H1 (cell line): ENCODE measurements at regions of chr3 and their contacts with region 1.

Region 1: DNA sequence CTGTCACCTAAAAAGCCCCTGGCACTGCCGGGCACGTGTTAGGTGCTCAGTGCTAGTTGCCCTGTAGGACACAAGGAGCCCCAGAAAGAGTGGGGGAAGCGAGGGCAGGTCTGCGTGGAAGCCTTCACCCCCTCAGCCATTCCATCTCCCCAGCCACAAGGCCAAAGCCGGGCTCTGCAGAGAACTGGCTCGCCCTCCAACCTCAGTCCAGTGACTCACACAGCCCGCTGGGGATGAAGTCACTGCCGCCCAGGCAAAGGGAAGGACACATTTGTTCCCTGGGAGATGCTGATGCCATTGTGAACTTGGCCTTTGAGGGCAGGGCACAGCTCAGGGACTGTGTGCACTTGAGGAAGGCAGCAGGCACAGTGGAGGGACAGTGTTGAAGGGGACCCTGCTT is 48.1 kb downstream of the IQSEC1 start:
- DNase-seq: no peak
- H3K4me3 ChIP-seq: no peak overlapping the region
- H3K27ac ChIP-seq: no peak overlapping the region
- H3K4me1 ChIP-seq: peaks cover 0 to 13% (median 9%) of the 10 kb centered on the region in 4 experiments; a peak in 5 of 7 replicates
- H3K27me3 ChIP-seq: no peaks in the 10 kb centered on the region; a peak in 2 of 7 replicates
- CTCF ChIP-seq: no peak
- EP300 ChIP-seq: no peak
- POLR2A ChIP-seq: no peak
- RAD21 ChIP-seq: no peak

Region 2: GRCh38 chr3:12940854-12941253 is 84.2 kb before region 1 on chr3:
- CTCF ChIA-PET with region 1: no interaction called
- POLR2A ChIA-PET with region 1: no interaction called
- DNase-seq: no peak
- H3K4me3 ChIP-seq: no peak overlapping the region
- H3K27ac ChIP-seq: no peak overlapping the region
- H3K4me1 ChIP-seq: peaks cover 0 to 9% (median 6%) of the 10 kb centered on the region in 4 experiments; a peak in 6 of 7 replicates
- H3K27me3 ChIP-seq: no peaks in the 10 kb centered on the region
- CTCF ChIP-seq: no peak
- EP300 ChIP-seq: no peak
- POLR2A ChIP-seq: no peak
- RAD21 ChIP-seq: no peak

Region 3: GRCh38 chr3:13002398-13003124 is 22.5 kb before region 1 on chr3:
- CTCF ChIA-PET with region 1: interaction called, 71 read pairs
- POLR2A ChIA-PET with region 1: interaction called, 3 read pairs
- DNase-seq: no peak
- H3K4me3 ChIP-seq: no peak overlapping the region
- H3K27ac ChIP-seq: no peak overlapping the region
- H3K4me1 ChIP-seq: peaks cover 0 to 2% (median 0%) of the 10 kb centered on the region in 4 experiments; a peak in 2 of 7 replicates
- H3K27me3 ChIP-seq: 0 out of 7 replicates have a peak, but pooled peaks cover 0 to 3% (median 0%) of the 10 kb centered on the region in 4 experiments
- CTCF ChIP-seq: no peak
- EP300 ChIP-seq: no peak
- POLR2A ChIP-seq: no peak
- RAD21 ChIP-seq: no peak

Region 4: GRCh38 chr3:13012228-13012691 is 12.8 kb before region 1 on chr3:
- CTCF ChIA-PET with region 1: interaction called, 71 read pairs
- POLR2A ChIA-PET with region 1: no interaction called
- DNase-seq: no peak
- H3K4me3 ChIP-seq: no peak overlapping the region
- H3K27ac ChIP-seq: no peak overlapping the region
- H3K4me1 ChIP-seq: peaks cover 7 to 16% (median 9%) of the 10 kb centered on the region in 4 experiments
- H3K27me3 ChIP-seq: no peaks in the 10 kb centered on the region; a peak in 2 of 7 replicates
- CTCF ChIP-seq: no peak
- EP300 ChIP-seq: no peak
- POLR2A ChIP-seq: no peak
- RAD21 ChIP-seq: no peak

Region 5: GRCh38 chr3:13040361-13041074 is 15.4 kb after region 1 on chr3:
- CTCF ChIA-PET with region 1: interaction called, 42 read pairs
- POLR2A ChIA-PET with region 1: interaction called, 3 read pairs
- DNase-seq: no peak
- H3K4me3 ChIP-seq: no peak overlapping the region
- H3K27ac ChIP-seq: no peak overlapping the region
- H3K4me1 ChIP-seq: peaks cover 0 to 8% (median 3%) of the 10 kb centered on the region in 4 experiments; a peak in 2 of 7 replicates
- H3K27me3 ChIP-seq: 0 out of 7 replicates have a peak, but pooled peaks cover 0 to 2% (median 0%) of the 10 kb centered on the region in 4 experiments
- CTCF ChIP-seq: no peak
- EP300 ChIP-seq: no peak
- POLR2A ChIP-seq: no peak
- RAD21 ChIP-seq: no peak

Region 6: GRCh38 chr3:13045904-13046568 is 20.9 kb after region 1 on chr3:
- CTCF ChIA-PET with region 1: interaction called, 42 read pairs
- POLR2A ChIA-PET with region 1: interaction called, 4 read pairs
- DNase-seq: no peak
- H3K4me3 ChIP-seq: no peak overlapping the region
- H3K27ac ChIP-seq: no peak overlapping the region
- H3K4me1 ChIP-seq: peaks cover 0 to 8% (median 5%) of the 10 kb centered on the region in 4 experiments; a peak in 4 of 7 replicates
- H3K27me3 ChIP-seq: 0 out of 7 replicates have a peak, but pooled peaks cover 0 to 2% (median 0%) of the 10 kb centered on the region in 4 experiments
- CTCF ChIP-seq: no peak
- EP300 ChIP-seq: no peak
- POLR2A ChIP-seq: no peak
- RAD21 ChIP-seq: no peak

Region 7: GRCh38 chr3:13379201-13379830 is 354.2 kb after region 1 on chr3:
- CTCF ChIA-PET with region 1: no interaction called
- POLR2A ChIA-PET with region 1: no interaction called
- DNase-seq: no peak
- H3K4me3 ChIP-seq: no peak overlapping the region
- H3K27ac ChIP-seq: no peak overlapping the region
- H3K4me1 ChIP-seq: no peaks in the 10 kb centered on the region
- H3K27me3 ChIP-seq: no peaks in the 10 kb centered on the region
- CTCF ChIP-seq: no peak
- EP300 ChIP-seq: no peak
- POLR2A ChIP-seq: no peak
- RAD21 ChIP-seq: no peak